Right ventricle myocardium inferior (tissue), 1 donor: ENCODE measurements at regions of chr19 and their contacts with region 1.

Region 1: DNA sequence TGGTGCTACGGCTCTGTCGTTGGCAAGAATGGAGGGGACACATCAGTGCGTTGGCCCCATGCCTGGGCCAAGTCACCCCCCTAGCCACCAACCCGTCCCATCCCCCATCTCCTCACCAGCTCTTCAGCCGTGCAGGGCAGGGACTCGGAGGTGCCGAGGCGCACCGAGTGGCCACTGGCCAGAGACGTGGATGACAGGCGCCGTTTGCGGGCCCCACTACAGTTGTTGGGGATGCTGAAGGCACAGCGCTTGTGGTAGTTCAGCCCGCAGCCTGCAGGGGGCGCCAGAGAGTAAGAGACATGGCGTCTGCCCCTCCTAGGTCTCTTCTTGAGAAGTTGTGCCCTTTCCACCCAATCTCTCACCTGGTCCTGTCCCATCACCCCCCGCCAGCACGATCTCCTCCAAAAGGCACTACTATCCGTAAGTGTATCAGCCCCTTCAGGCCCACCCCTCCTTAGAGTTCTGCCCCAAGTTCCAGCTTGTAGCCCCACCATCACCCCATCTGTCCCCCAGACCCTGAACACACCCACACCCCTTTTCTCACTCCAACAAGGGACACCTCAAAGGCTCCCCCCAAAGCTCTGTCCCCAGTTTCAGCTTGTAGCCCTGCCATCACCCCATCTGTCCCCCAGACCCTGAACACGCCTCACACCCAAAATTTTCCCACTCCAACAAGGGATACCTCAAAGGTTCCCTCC is 12.4 kb downstream of the PRKD2 start:
- DNase-seq: peak; percentile 91
- ATAC-seq: peak; percentile 69

Region 2: DNA sequence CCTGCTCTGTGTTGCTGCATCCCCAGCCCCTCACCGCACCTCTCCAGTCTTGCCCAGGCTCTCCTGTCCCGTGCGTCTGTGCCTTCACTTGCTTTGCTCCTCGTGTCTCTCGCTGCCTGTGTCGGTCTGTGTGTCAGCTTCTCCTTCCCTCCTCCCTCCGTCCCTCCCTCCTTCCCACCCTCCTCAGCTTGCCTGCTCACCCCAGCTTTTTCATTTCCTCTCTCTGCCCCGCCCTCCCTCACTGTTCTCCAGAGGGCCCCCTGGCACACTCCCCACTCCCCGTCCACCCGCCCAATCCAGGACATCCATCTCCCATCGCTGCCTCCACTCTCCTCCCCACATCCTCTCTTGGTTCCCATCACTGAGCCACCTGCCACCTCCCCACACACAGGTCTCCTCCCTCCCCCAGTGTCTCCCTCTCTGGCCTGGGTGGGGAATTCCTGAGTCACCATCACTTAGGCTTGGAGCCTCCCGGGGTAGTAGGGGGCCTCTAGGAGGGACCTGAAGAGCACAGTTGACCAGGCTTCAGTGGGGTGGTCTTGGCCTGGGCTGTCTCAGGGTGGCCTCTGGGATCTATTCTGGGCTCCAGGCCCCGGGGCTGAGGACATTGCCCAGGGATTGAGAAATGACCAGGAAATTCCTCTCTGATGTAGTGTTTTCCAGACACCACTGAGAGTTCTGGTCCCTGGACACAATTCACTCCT is 79.4 kb before region 1 on chr19 and contains the start of gene PTGIR:
- intact Hi-C with region 1: no loop called
- DNase-seq: peak; percentile 84
- ATAC-seq: peak; percentile 88
- total RNA-seq, gene PTGIR: 3.8 TPM

Region 3: GRCh38 chr19:46718157-46718933 is 13.8 kb after region 1 on chr19:
- intact Hi-C with region 1: no loop called
- DNase-seq: peak; percentile 61
- ATAC-seq: no peak

Region 4: GRCh38 chr19:46728693-46729676 is 24.5 kb after region 1 on chr19:
- intact Hi-C with region 1: loop called (anchors 1 kb)
- DNase-seq: peak; percentile 93
- ATAC-seq: peak; percentile 62

Region 5: GRCh38 chr19:46746281-46747013 is 41.9 kb after region 1 on chr19 and contains the start of gene STRN4:
- intact Hi-C with region 1: loop called (anchors 5 kb)
- DNase-seq: peak; percentile 85
- ATAC-seq: peak; percentile 70
- total RNA-seq, gene STRN4: 51.4 TPM